Activated T-helper 1 cell treated with anti-CD3 and anti-CD28 coated beads, Interleukin-12 subunit alpha, Interleukin-12 subunit beta, Interleukin-2, Interleukin-4 antibody, amounts not matched to agents 30 ng/mL and 10 ng/mL and 1 ng/mL, durations not matched to agents 14 hours and 24 hours and 36 hours (primary cell): ENCODE measurements at regions of chr13 and their contacts with region 1.

Region 1: DNA sequence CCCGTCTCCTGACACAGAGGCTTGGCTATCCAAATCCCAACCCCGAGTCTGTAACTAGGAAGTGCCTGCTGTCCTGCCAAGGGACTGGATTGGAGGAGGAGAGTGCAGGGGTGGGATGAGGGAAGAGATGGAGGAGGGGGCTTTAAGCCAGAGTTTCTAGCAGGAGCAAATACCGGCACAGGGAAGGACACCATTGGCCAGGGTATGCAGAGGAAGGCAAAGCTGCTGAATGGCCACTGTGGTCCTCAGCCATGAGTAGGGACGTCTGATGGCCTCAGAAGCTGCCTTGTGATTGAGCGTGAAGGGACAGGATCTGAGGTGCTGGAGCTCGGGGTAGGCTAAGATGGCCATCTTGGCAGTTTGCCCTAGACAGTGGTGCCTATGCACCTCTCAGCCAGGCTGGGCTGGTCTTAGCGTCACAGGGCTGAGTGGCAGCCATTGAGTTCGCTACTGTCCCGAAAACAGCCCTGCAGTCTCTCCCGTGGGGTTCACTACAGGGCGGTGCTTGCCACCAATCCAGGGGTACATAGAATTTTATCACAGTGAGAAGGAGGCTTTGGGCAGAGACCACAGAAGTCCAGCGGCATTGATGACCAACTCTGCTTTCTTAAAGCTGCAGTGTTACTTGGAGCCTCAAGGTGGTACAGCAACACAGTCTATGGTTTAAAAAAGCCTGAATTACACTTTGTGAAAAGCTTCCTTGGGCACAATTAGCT is 61.8 kb downstream of the AKAP11 start:
- DNase-seq: no peak
- H3K4me3 Mint-ChIP-seq: no peak overlapping the region
- H3K27ac Mint-ChIP-seq: peak overlapping the region; percentile 6
- H3K4me1 Mint-ChIP-seq: peaks cover 51% of the 10 kb centered on the region
- H3K27me3 Mint-ChIP-seq: no peaks in the 10 kb centered on the region

Region 2: GRCh38 chr13:41678249-41678648 is 655.5 kb before region 1 on chr13:
- intact Hi-C with region 1: no loop called
- DNase-seq: no peak
- H3K4me3 Mint-ChIP-seq: no peak overlapping the region
- H3K27ac Mint-ChIP-seq: no peak overlapping the region
- H3K4me1 Mint-ChIP-seq: no peaks in the 10 kb centered on the region
- H3K27me3 Mint-ChIP-seq: no peaks in the 10 kb centered on the region

Region 3: DNA sequence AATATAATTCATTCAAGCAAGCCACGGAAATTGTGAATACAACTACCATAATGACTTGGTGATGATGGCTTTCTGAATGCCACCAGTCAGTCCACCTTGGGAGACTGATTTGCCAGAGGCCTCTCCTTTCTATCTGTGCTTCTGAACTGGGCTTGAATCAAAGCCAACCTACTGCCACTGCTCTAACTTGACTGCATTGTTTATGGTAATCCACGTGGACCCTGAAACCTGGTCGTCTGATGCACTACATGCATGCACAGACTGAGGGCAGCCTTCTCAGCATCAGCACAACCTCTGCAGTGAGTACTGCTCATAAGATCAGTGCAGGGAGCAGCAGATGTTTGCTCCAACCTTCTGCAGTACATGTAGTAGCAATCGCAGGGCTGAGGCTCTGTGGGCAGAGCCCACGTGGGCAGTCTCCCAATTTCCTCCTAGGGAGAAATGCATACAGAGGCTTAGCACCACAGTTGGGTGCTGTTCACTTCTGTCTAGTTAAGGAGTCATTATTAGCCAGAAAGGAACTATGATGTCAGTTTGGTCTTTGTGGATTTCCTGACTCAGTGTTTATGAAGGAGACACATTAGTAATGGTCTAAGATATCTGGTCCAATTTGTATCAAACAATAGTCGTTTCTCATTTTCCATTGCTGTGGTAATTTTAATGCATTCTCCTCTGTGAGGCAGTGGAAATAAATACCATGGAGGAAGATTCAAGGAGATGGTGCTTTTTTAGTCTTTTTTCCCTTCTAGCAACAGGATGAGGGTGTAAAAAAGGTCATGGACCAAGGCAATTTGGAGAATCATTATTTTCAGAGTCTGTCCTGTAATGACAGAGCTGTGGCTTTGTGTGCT is 20.7 kb after region 1 on chr13:
- intact Hi-C with region 1: loop called (anchors 1 kb)
- DNase-seq: no peak
- H3K4me3 Mint-ChIP-seq: peak overlapping the region; percentile 72
- H3K27ac Mint-ChIP-seq: peak overlapping the region; percentile 99
- H3K4me1 Mint-ChIP-seq: peaks cover 68% of the 10 kb centered on the region
- H3K27me3 Mint-ChIP-seq: peaks cover 1% of the 10 kb centered on the region

Region 4: GRCh38 chr13:42377640-42378382 is 44.0 kb after region 1 on chr13:
- intact Hi-C with region 1: loop called (anchors 1 kb)
- DNase-seq: peak; percentile 68
- H3K4me3 Mint-ChIP-seq: peak overlapping the region; percentile 38
- H3K27ac Mint-ChIP-seq: peak overlapping the region; percentile 89
- H3K4me1 Mint-ChIP-seq: peaks cover 82% of the 10 kb centered on the region
- H3K27me3 Mint-ChIP-seq: no peaks in the 10 kb centered on the region

Region 5: GRCh38 chr13:42478531-42479156 is 144.9 kb after region 1 on chr13:
- intact Hi-C with region 1: loop called (anchors 1 kb)
- DNase-seq: no peak
- H3K4me3 Mint-ChIP-seq: no peak overlapping the region
- H3K27ac Mint-ChIP-seq: no peak overlapping the region
- H3K4me1 Mint-ChIP-seq: peaks cover 24% of the 10 kb centered on the region
- H3K27me3 Mint-ChIP-seq: no peaks in the 10 kb centered on the region

Region 6: DNA sequence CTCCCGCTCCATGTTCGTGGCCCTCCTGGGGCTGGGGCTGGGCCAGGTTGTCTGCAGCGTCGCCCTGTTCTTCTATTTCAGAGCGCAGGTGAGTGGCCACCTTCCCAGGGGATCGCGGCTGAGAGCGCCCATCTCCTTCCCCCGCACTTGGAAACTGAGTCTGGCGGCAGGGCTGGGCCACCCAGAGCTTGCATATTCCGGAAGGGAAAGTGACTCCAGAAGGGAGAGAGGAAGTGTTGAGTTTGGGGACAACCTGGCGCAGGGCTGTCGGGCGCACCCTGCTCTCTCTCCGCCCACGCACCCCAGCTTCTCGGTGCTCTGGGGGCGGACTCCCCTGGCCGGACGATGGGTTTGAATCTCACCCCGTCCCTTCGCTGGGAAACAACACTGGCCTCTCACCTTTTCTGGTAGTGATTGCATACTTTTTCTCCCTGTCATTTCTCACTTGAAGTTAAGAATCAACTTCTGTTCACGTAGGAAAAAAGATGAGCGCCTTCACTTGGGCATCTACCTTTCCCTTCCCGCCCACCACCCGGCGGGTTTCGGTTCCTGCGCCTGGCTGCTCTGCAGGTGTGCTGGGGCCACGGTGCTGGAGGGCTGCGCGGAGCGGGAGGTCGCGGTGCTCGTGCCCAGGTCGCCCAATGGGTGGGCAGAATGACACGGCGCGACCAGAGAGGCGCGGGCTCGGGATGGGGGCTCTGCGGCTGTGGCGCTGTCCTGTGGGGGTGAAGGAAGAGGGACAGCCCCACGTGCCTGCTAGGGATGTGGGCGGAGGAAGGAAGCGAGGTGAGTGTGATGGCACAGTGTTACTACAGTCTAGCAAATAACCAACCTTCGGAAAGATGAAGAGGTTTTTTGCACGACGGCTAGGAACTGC is 240.9 kb after region 1 on chr13:
- intact Hi-C with region 1: loop called (anchors 1 kb)
- DNase-seq: no peak
- H3K4me3 Mint-ChIP-seq: peak overlapping the region; percentile 74
- H3K27ac Mint-ChIP-seq: peak overlapping the region; percentile 64
- H3K4me1 Mint-ChIP-seq: peaks cover 19% of the 10 kb centered on the region
- H3K27me3 Mint-ChIP-seq: peaks cover 59% of the 10 kb centered on the region

Region 7: GRCh38 chr13:42594970-42595571 is 261.3 kb after region 1 on chr13:
- intact Hi-C with region 1: loop called (anchors 2 kb)
- DNase-seq: peak; percentile 12
- H3K4me3 Mint-ChIP-seq: no peak overlapping the region
- H3K27ac Mint-ChIP-seq: no peak overlapping the region
- H3K4me1 Mint-ChIP-seq: peaks cover 2% of the 10 kb centered on the region
- H3K27me3 Mint-ChIP-seq: peaks cover 10% of the 10 kb centered on the region